MCF 10A (cell line): ENCODE measurements at regions of chr2 and their contacts with region 1.

Region 1: DNA sequence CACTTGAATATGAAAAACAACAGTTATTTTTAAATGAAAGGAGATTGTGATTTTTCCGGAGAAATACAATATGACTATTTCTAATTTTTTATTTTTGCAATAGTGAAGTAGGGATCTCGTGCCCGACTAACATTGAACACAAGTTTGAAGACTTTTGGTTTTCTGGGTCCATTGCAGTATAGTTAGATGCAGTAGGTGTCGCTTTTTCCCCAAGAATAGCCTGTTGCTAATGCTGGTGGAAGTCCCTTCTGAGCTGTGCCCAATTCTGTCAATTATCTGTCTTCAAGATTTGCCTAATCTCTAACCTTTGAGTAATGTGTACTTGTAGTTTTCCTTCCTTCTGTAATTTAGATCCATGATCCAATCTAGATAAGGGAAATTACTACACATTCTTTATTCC is 36.5 kb downstream of the SEMA4F start:
- DNase-seq: peak; percentile 75
- H3K4me3 Mint-ChIP-seq: no peak overlapping the region
- H3K27ac Mint-ChIP-seq: no peak overlapping the region
- H3K4me1 Mint-ChIP-seq: peaks cover 6% of the 10 kb centered on the region
- H3K27me3 Mint-ChIP-seq: no peaks in the 10 kb centered on the region
- CTCF ChIP-seq: peak; percentile 89

Region 2: GRCh38 chr2:74104839-74105238 is 585.7 kb before region 1 on chr2:
- CTCF ChIA-PET with region 1: no interaction called
- POLR2A ChIA-PET with region 1: no interaction called
- intact Hi-C with region 1: no loop called
- DNase-seq: no peak
- H3K4me3 Mint-ChIP-seq: no peak overlapping the region
- H3K27ac Mint-ChIP-seq: no peak overlapping the region
- H3K4me1 Mint-ChIP-seq: peaks cover 3% of the 10 kb centered on the region
- H3K27me3 Mint-ChIP-seq: no peaks in the 10 kb centered on the region
- CTCF ChIP-seq: peak; percentile 10

Region 3: GRCh38 chr2:74725287-74725686 is 34.7 kb after region 1 on chr2:
- CTCF ChIA-PET with region 1: no interaction called
- POLR2A ChIA-PET with region 1: no interaction called
- intact Hi-C with region 1: no loop called
- DNase-seq: no peak
- H3K4me3 Mint-ChIP-seq: no peak overlapping the region
- H3K27ac Mint-ChIP-seq: no peak overlapping the region
- H3K4me1 Mint-ChIP-seq: no peaks in the 10 kb centered on the region
- H3K27me3 Mint-ChIP-seq: no peaks in the 10 kb centered on the region
- CTCF ChIP-seq: no peak

Region 4: DNA sequence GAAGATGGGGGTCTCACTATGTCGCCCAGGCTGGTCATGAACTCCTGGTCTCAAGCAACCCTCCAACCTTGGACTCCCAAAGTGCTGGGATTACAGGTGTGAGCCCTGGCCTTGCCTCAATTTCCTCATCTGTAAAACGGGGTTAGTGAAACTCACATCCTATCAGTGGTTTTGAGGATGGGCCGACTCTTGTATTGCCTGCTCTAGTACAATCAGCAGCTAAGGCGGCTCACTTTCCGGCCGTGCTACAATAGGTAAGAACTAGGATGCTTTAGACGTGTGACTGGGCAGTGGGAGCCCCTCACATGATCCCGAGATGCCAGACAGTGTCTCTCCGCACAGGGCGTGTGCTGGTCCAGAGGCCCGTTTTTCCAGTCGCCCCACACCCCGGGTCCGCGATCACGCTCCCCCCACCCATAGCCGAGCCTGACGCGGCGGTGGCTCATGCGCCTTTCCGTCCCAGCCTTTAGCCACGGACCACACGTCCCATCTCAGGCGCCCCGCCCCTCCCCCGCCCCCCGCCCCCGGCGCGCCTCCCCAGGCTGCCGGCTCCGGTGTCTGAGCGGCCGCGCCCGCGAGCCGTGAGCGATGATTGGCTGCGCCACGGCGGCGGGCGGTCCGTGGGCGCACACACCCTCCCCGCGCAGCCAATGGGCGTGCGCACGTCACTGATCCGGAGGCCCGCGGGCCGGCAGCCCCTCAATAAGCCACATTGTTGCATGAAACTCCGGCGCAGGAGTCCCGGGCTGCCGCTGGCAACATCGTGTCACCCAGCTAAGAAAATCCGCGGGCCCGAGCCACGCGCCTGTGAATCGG is 143.1 kb after region 1 on chr2 and contains the start of gene HK2:
- CTCF ChIA-PET with region 1: interaction called, 6 read pairs
- POLR2A ChIA-PET with region 1: interaction called, 10 read pairs
- intact Hi-C with region 1: loop called (anchors 1 kb)
- DNase-seq: peak; percentile 88
- H3K4me3 Mint-ChIP-seq: peak within 1 kb of the TSS; percentile 85
- H3K27ac Mint-ChIP-seq: peak within 1 kb of the TSS; percentile 86
- H3K4me1 Mint-ChIP-seq: peaks cover 34% of the 10 kb centered on the region
- H3K27me3 Mint-ChIP-seq: no peaks in the 10 kb centered on the region
- CTCF ChIP-seq: no peak
- total RNA-seq, gene HK2: 40.4 and 47.8 TPM in 2 replicates

Region 5: GRCh38 chr2:74982577-74982976 is 292.0 kb after region 1 on chr2:
- CTCF ChIA-PET with region 1: interaction called, 7 read pairs
- POLR2A ChIA-PET with region 1: no interaction called
- intact Hi-C with region 1: loop called (anchors 1 kb)
- DNase-seq: peak; percentile 55
- H3K4me3 Mint-ChIP-seq: no peak overlapping the region
- H3K27ac Mint-ChIP-seq: no peak overlapping the region
- H3K4me1 Mint-ChIP-seq: no peaks in the 10 kb centered on the region
- H3K27me3 Mint-ChIP-seq: no peaks in the 10 kb centered on the region
- CTCF ChIP-seq: peak; percentile 43

Region 6: GRCh38 chr2:75053484-75054112 is 363.0 kb after region 1 on chr2:
- CTCF ChIA-PET with region 1: interaction called, 5 read pairs
- POLR2A ChIA-PET with region 1: no interaction called
- intact Hi-C with region 1: loop called (anchors 5 kb)
- DNase-seq: peak; percentile 62
- H3K4me3 Mint-ChIP-seq: no peak overlapping the region
- H3K27ac Mint-ChIP-seq: no peak overlapping the region
- H3K4me1 Mint-ChIP-seq: no peaks in the 10 kb centered on the region
- H3K27me3 Mint-ChIP-seq: no peaks in the 10 kb centered on the region
- CTCF ChIP-seq: peak; percentile 78

Region 7: GRCh38 chr2:75241696-75242095 is 551.1 kb after region 1 on chr2:
- CTCF ChIA-PET with region 1: interaction called, 10 read pairs
- POLR2A ChIA-PET with region 1: no interaction called
- intact Hi-C with region 1: loop called (anchors 2 kb)
- DNase-seq: peak; percentile 40
- H3K4me3 Mint-ChIP-seq: no peak overlapping the region
- H3K27ac Mint-ChIP-seq: no peak overlapping the region
- H3K4me1 Mint-ChIP-seq: peaks cover 9% of the 10 kb centered on the region
- H3K27me3 Mint-ChIP-seq: no peaks in the 10 kb centered on the region
- CTCF ChIP-seq: no peak

Region 8: DNA sequence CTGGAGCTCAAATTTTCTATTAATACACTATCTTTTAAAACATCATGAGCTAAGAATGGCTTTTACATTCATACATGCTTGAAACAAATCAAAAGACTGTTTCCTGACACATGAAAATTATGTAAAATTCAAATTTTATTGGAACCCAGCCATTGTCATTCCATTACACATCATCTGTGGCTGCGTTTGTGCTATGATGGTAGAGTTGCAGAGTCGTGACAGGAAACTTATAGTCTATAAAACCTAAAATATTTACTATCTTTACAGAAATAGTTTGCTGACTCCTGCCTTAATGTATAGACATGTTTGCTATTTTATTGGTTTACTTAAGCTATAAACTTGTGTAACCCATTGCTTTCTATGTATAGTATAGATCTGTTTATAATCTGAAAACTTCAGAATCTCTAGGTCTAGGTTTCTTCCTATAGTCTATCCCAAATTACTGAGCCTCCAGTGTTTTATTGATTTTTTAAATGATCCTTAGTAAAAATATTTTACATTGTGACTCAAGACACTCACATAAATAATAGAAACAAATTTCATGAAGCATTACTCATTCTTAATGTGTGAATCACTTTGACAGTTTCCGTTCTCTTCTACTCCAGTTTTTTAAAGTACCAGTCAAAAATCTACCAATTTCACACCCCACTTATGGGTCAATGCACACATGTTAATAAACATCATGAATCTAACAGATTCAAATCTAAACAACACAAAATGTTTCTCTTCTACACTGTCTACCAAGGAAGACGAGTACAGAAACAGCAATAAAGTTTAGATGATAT is 929.6 kb after region 1 on chr2:
- CTCF ChIA-PET with region 1: no interaction called
- POLR2A ChIA-PET with region 1: no interaction called
- intact Hi-C with region 1: loop called (anchors 5 kb)
- DNase-seq: peak; percentile 40
- H3K4me3 Mint-ChIP-seq: no peak overlapping the region
- H3K27ac Mint-ChIP-seq: peak overlapping the region; percentile 57
- H3K4me1 Mint-ChIP-seq: peaks cover 18% of the 10 kb centered on the region
- H3K27me3 Mint-ChIP-seq: no peaks in the 10 kb centered on the region
- CTCF ChIP-seq: no peak